ENCODE measurements at regions of chr2 and their contacts with region 1.

Region 1: DNA sequence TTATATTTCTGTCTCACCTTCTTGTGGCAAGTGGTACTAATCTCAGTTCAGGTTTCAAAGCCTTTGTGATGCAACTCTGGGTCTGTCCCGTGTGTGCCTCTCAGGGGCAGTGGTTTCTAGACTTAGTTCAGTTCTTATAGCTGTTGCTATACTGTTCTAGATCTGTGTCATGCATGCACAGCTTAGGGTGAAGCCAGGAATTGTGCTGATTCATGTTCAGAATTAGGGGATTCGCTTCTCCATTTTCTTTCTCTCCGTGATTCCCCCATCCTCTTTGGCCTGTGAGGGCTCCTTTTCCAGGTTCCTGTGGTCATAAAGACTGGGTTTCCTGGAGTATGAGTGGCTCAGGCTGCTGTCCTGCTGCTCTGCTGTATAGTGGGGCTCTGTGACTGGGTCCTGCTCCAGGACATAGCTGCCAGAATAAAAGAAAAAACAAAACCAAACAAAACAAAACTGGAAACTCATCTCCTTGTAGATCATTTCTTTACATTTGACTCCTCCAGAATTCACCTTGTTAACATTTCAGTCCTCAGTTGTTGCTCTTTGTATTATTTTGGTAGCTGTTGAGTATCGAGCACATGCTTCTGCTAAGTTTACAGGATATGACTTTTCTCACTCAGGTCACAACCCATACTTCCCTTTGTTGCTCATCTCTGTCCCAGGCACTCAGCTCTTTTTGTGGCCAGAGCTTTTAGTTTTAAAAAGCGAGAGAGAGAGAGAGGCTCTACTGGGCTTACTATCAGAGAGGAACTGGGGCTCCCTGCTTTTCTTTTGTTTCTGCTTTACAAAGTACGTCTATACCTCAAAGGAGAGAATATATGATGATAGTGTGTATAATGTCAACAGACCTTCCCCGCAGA is 34.2 kb downstream of the CERS6 start:
- DNase-seq: peak; percentile 70
- ATAC-seq: peak; percentile 78
- H3K4me3 ChIP-seq: peak overlapping the region; percentile 42 to 55 (median 43)
- H3K27ac ChIP-seq: peak overlapping the region; percentile 70
- H3K4me1 ChIP-seq: peaks cover 67% of the 10 kb centered on the region
- H3K27me3 ChIP-seq: no peaks in the 10 kb centered on the region
- CTCF ChIP-seq: no peak
- EP300 ChIP-seq: 0 out of 4 replicates have a peak, but pooled peaks of 1 of the 2 experiments have one; percentile 21
- POLR2A ChIP-seq: 0 out of 4 replicates have a peak, but pooled peaks of 1 of the 2 experiments have one; percentile 28
- RAD21 ChIP-seq: no peak

Region 2: GRCh38 chr2:167572883-167573619 is 917.2 kb before region 1 on chr2:
- CTCF ChIA-PET with region 1: no interaction called
- POLR2A ChIA-PET with region 1: no interaction called
- in situ Hi-C with region 1: no loop called
- intact Hi-C with region 1: no loop called
- DNase-seq: no peak
- ATAC-seq: no peak
- H3K4me3 ChIP-seq: no peak overlapping the region
- H3K27ac ChIP-seq: no peak overlapping the region
- H3K4me1 ChIP-seq: no peaks in the 10 kb centered on the region
- H3K27me3 ChIP-seq: no peaks in the 10 kb centered on the region
- CTCF ChIP-seq: no peak
- EP300 ChIP-seq: no peak
- POLR2A ChIP-seq: no peak
- RAD21 ChIP-seq: no peak

Region 3: DNA sequence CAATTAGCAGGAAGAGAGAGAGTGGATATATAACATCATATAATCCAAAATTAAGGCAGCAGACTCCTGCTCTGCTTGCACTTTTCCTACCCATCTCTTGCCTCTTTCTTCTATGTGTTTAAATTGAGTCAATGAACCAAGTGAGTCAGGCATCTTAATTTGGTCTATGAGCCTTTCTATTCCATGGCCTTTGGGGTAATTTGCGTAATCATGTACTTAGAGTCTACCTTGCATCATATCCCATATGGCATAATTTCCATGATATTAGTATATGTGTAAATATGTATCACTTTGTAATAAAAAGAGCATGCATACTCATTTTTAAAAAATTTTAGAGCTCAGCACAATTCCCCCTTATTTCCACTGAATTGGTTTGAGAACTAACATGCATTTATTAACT is 798.1 kb before region 1 on chr2:
- CTCF ChIA-PET with region 1: no interaction called
- POLR2A ChIA-PET with region 1: no interaction called
- in situ Hi-C with region 1: no loop called
- intact Hi-C with region 1: no loop called
- DNase-seq: no peak
- ATAC-seq: no peak
- H3K4me3 ChIP-seq: no peak overlapping the region
- H3K27ac ChIP-seq: no peak overlapping the region
- H3K4me1 ChIP-seq: no peaks in the 10 kb centered on the region
- H3K27me3 ChIP-seq: no peaks in the 10 kb centered on the region
- CTCF ChIP-seq: no peak
- EP300 ChIP-seq: no peak
- POLR2A ChIP-seq: no peak
- RAD21 ChIP-seq: no peak

Region 4: DNA sequence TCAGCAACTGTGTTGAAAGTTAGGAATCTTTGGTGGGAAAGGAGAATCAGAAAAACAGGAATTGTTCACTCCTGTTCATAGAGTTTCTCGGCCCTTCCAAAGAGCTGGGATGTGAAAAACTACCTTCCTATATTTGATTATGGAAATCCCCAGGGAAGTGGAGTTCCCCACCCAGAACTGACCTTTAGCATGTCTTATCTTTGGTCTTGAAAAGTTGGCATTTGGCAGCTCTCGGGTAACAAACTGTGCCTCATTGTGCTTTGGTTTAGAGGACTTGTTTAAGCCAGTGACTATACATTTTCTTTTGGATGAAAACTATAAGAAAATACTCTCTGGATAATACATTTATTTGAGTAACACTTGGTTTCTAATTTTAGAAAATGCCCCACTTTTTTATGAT is 85.5 kb before region 1 on chr2:
- CTCF ChIA-PET with region 1: no interaction called
- POLR2A ChIA-PET with region 1: no interaction called
- in situ Hi-C with region 1: no loop called
- intact Hi-C with region 1: loop called (anchors 1 kb)
- DNase-seq: peak; percentile 24
- ATAC-seq: no peak; the same call in 1 of the 3 replicates
- H3K4me3 ChIP-seq: no peak overlapping the region
- H3K27ac ChIP-seq: no peak overlapping the region
- H3K4me1 ChIP-seq: peaks cover 7% of the 10 kb centered on the region
- H3K27me3 ChIP-seq: peaks cover 0 to 1% of the 10 kb centered on the region in 2 experiments; a peak in 1 of 5 replicates
- CTCF ChIP-seq: no peak
- EP300 ChIP-seq: no peak
- POLR2A ChIP-seq: no peak
- RAD21 ChIP-seq: no peak

Region 5: GRCh38 chr2:168455648-168456520 is 34.4 kb before region 1 on chr2 and contains the start of gene CERS6:
- CTCF ChIA-PET with region 1: no interaction called
- POLR2A ChIA-PET with region 1: interaction called, 23 read pairs
- in situ Hi-C with region 1: no loop called
- intact Hi-C with region 1: loop called (anchors 1 kb)
- DNase-seq: peak; percentile 89
- ATAC-seq: peak; percentile 95
- H3K4me3 ChIP-seq: peak within 1 kb of the TSS; percentile 81 to 88 (median 86)
- H3K27ac ChIP-seq: peak within 1 kb of the TSS; percentile 80
- H3K4me1 ChIP-seq: peaks cover 56% of the 10 kb centered on the region
- H3K27me3 ChIP-seq: no peaks in the 10 kb centered on the region; a peak in 1 of 5 replicates
- CTCF ChIP-seq: no peak; the same call in 1 of the 2 replicates
- EP300 ChIP-seq: no peak
- POLR2A ChIP-seq: peak; percentile 77 to 98
- RAD21 ChIP-seq: no peak; the same call in 1 of the 2 replicates
- total RNA-seq, gene CERS6: 17.3 and 20.3 TPM in 2 replicates

Region 6: DNA sequence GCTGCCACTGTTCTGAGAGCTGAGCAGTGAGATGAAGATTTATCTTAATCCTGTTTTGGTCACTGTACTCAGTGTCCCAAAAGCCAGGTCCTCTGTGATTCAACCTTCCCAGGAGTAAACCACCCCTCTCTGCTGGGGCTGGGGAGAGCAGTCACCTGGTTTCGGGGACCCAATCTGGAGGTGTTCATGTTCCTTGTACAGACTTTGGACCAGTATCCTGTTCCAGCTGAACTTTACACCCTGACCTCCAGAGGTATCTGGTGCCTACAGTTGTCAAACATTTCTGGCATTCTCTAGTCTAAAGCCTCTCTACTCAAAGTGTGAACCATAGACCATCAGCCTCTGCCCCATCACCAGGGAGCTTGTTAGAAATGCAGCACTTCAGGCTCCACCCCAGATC is 12.0 kb before region 1 on chr2:
- CTCF ChIA-PET with region 1: interaction called, 3 read pairs
- POLR2A ChIA-PET with region 1: interaction called, 7 read pairs
- in situ Hi-C with region 1: no loop called
- intact Hi-C with region 1: loop called (anchors 2 kb)
- DNase-seq: peak; percentile 84
- ATAC-seq: peak; percentile 98
- H3K4me3 ChIP-seq: no peak overlapping the region
- H3K27ac ChIP-seq: peak overlapping the region; percentile 61
- H3K4me1 ChIP-seq: peaks cover 57% of the 10 kb centered on the region
- H3K27me3 ChIP-seq: no peaks in the 10 kb centered on the region
- CTCF ChIP-seq: no peak
- EP300 ChIP-seq: peak in 1 of 2 experiments; percentile 72; a peak in 2 of 4 replicates
- POLR2A ChIP-seq: no peak
- RAD21 ChIP-seq: peak; percentile 43; the same call in 1 of the 2 replicates

Region 7: DNA sequence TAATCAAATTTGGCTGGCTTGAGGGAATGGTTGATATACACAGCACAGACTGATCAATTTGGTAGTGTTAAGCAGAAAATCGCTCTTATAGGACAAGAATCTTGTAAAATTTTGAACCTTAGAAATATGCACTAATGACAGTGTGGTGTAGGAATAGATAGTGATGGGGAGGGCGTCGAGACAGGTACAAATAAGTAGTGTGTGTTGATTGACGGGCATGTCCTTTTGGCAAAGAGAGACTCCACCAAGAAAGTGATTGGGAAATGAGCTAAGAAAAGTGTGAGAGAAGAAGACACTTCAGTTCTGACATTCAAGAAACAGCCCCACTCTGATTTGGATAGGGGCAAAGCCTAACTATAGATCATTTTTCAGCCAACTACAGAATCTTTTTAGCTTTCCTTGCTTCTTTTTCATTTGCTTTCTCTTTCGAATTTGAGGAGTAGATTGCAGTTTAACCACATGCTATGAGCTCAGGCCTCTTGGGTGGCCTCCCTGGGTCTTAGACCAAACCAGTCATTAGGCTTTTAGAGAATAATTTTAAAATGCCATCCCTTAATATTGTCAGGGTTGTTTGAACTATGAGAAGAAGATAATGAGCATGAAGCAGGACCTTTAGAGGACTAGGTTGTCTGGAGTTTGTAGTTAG is 92.9 kb after region 1 on chr2:
- CTCF ChIA-PET with region 1: no interaction called
- POLR2A ChIA-PET with region 1: no interaction called
- in situ Hi-C with region 1: no loop called
- intact Hi-C with region 1: no loop called
- DNase-seq: no peak
- ATAC-seq: no peak
- H3K4me3 ChIP-seq: no peak overlapping the region
- H3K27ac ChIP-seq: no peak overlapping the region
- H3K4me1 ChIP-seq: no peaks in the 10 kb centered on the region
- H3K27me3 ChIP-seq: no peaks in the 10 kb centered on the region
- CTCF ChIP-seq: no peak
- EP300 ChIP-seq: no peak
- POLR2A ChIP-seq: no peak
- RAD21 ChIP-seq: no peak

Region 8: GRCh38 chr2:168705534-168706470 is 215.6 kb after region 1 on chr2:
- CTCF ChIA-PET with region 1: no interaction called
- POLR2A ChIA-PET with region 1: no interaction called
- in situ Hi-C with region 1: no loop called
- intact Hi-C with region 1: loop called (anchors 5 kb)
- DNase-seq: peak; percentile 12
- ATAC-seq: 0 out of 3 replicates have a peak, but pooled peaks have one; percentile 38
- H3K4me3 ChIP-seq: no peak overlapping the region
- H3K27ac ChIP-seq: no peak overlapping the region
- H3K4me1 ChIP-seq: no peaks in the 10 kb centered on the region
- H3K27me3 ChIP-seq: no peaks in the 10 kb centered on the region
- CTCF ChIP-seq: peak; percentile 50
- EP300 ChIP-seq: no peak
- POLR2A ChIP-seq: no peak
- RAD21 ChIP-seq: no peak

Region 9: DNA sequence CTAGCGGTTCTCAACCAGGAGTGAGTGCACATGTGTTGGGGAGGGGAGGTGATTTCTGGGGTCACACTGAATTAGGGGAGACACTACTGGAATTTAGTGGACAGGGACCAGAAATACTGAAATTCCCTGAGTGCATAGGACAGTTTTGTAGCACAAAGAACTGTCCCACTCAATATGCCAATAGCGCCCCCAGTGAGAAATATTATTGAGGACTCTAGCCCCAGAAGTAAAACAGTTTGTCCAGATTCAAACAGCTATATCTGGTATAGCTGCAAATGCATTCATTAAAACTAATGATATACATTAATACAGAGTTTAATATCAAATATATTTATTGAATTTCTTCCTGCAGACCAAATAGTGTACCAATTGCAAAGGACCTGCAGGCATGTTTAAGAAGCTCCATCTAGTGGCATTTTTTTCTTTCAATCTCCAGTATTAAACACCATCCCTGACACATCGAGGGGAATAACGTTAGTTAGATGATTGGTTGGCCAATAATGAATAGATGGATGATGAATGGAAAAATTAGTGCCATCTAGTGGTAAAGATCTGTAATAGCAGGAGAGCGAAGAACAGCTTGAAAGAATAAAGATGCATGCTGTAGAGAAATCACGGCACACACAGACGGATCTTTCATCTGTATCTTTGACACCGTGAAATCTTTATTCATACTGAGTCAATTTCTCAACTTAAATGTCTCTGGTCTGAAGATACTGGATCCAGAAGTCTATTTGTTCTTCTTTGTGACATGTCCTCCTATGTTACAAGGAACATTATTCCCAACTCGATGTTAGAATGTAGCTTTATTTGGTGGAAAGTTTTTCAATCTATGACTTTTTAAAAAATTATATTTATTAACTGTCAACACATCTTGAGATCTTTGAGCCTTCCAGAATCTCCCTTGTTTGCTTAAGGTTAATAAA is 641.6 kb after region 1 on chr2:
- CTCF ChIA-PET with region 1: no interaction called
- POLR2A ChIA-PET with region 1: no interaction called
- in situ Hi-C with region 1: no loop called
- intact Hi-C with region 1: no loop called
- DNase-seq: peak; percentile 40
- ATAC-seq: peak; percentile 59
- H3K4me3 ChIP-seq: no peak overlapping the region
- H3K27ac ChIP-seq: no peak overlapping the region
- H3K4me1 ChIP-seq: no peaks in the 10 kb centered on the region
- H3K27me3 ChIP-seq: peaks cover 0 to 11% of the 10 kb centered on the region in 2 experiments; a peak in 3 of 5 replicates
- CTCF ChIP-seq: peak; percentile 79
- EP300 ChIP-seq: no peak
- POLR2A ChIP-seq: no peak
- RAD21 ChIP-seq: no peak